ENCODE measurements at regions of chr10 and their contacts with region 1.

Region 1: GRCh38 chr10:18651324-18652007 is at the start of gene NSUN6:
- DNase-seq: peak; percentile 82
- ATAC-seq: peak; percentile 99
- H3K4me3 ChIP-seq: peak within 1 kb of the TSS; percentile 74 to 99 (median 84)
- H3K27ac ChIP-seq: peak within 1 kb of the TSS; percentile 75
- H3K4me1 ChIP-seq: peaks cover 34% of the 10 kb centered on the region
- H3K27me3 ChIP-seq: no peaks in the 10 kb centered on the region; a peak in 1 of 5 replicates
- CTCF ChIP-seq: no peak
- EP300 ChIP-seq: no peak
- POLR2A ChIP-seq: peak; percentile 44 to 72; a peak in 3 of 4 replicates
- RAD21 ChIP-seq: no peak
- total RNA-seq, gene NSUN6: 15.6 and 17.2 TPM in 2 replicates

Region 2: DNA sequence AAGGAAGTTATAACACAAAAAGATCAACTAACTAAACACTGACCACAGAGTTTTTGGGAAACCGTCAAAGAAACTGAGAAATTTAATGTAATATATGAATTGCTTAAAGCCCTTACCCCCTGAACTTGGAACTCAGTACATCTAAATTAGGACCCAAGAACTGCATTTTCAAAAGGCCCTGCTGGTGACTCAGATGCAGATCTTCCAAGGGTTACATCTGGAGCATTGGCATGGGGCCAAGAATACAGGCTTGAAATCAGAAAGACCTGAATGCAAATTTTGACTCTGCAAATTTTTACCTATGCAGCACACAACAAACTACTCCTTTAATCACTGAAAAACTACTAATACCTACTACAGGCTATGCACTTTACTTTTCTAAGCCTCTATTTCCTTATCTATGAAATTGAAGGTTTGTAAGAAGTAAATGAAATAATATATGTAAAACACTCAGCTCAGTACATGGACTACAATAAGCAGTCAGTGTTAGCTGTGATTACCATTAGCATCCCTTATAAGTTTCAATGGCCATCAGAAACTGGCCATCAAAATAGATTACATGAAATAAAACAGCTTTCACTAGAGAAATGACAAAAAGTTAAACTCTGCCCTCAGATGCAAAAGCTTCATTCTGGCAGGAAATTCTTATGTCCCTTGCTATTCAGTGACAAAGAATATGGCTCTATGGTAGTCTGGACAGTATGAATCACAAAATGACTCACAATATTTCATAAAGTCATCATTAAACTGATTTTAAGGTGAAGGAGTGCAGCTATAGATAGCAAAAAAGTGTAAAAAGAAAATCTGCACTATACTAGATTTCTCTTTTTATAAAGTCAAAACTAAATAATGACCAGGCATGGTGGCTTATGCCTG is 43.7 kb before region 1 on chr10:
- CTCF ChIA-PET with region 1: no interaction called
- POLR2A ChIA-PET with region 1: interaction called, 3 read pairs
- in situ Hi-C with region 1: no loop called
- intact Hi-C with region 1: loop called (anchors 2 kb)
- DNase-seq: peak; percentile 37
- ATAC-seq: no peak
- H3K4me3 ChIP-seq: no peak overlapping the region
- H3K27ac ChIP-seq: no peak overlapping the region
- H3K4me1 ChIP-seq: peaks cover 63% of the 10 kb centered on the region
- H3K27me3 ChIP-seq: no peaks in the 10 kb centered on the region
- CTCF ChIP-seq: no peak
- EP300 ChIP-seq: no peak
- POLR2A ChIP-seq: no peak
- RAD21 ChIP-seq: no peak

Region 3: DNA sequence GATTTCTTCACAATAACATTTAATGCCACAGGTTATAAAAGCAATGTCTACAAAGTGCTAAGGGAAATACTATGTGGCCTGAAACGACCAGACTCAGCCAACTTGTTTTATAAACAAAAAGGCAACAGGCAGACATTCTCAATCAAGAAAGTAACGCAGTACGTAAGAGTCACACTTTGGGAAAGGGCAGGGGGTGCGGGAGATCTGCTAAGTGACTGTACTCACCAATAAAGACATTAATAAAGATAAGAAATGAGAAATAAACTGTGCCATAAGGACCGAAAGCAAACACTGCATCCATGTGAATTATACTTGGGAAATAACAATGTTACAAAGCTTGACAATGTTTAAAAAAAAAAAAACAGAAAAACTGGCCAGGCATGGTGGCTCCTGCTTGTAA is 25.6 kb before region 1 on chr10:
- CTCF ChIA-PET with region 1: no interaction called
- POLR2A ChIA-PET with region 1: no interaction called
- in situ Hi-C with region 1: no loop called
- intact Hi-C with region 1: loop called (anchors 1 kb)
- DNase-seq: no peak
- ATAC-seq: no peak
- H3K4me3 ChIP-seq: no peak overlapping the region
- H3K27ac ChIP-seq: no peak overlapping the region
- H3K4me1 ChIP-seq: peaks cover 32% of the 10 kb centered on the region
- H3K27me3 ChIP-seq: no peaks in the 10 kb centered on the region
- CTCF ChIP-seq: no peak
- EP300 ChIP-seq: no peak
- POLR2A ChIP-seq: no peak
- RAD21 ChIP-seq: no peak

Measured in HepG2 (cell line).